Adrenal gland (tissue), 19 donors: ENCODE measurements at regions of chr20 and their contacts with region 1.

Region 1: DNA sequence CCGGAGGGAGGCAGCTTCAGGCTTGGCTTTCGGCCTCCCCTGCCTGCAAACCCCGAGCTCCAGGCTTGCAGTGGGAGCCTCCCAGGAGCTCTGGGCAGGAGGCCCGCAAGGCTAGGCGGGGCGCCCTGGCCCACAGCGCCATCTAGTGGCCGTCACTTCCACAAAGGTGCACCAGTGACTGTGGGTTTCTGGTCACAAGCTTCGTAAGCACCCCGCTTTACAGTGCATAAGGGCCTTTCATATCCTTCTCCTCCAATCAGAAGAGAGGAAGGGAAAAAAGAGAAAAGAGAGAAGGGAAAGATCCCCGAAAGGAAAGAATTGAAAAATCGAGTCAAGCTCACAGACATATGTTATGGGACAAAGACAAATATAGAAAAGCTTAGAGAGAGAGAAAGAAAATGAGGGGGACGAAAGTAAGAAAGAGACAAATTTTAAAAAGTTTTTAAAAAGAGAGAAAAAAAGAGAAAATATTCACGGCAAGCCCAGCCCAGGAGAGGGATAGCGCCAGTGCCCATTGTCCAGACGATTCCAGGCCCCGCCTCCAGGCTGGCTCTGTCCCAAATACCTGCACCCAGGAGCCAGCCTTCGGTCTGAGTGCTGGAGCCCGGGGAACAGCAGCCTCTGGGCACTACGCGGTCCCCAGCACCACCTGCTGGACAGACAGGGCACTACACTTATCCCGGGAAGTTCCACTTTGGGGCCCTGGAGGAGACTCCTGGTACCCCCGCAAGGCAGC is 207.1 kb downstream of the PREX1 start:
- DNase-seq: peak; percentile 77 to 94 (median 87)
- H3K4me3 ChIP-seq: peak overlapping the region in 2 of 4 donors; percentile 4 to 45
- H3K27ac ChIP-seq: no peak overlapping the region
- H3K4me1 ChIP-seq: peaks cover 3 to 23% of the 10 kb centered on the region in 2 donors
- H3K27me3 ChIP-seq: no peaks in the 10 kb centered on the region
- CTCF ChIP-seq: peak; percentile 73 to 97 (median 81)
- POLR2A ChIP-seq: no peak

Region 2: DNA sequence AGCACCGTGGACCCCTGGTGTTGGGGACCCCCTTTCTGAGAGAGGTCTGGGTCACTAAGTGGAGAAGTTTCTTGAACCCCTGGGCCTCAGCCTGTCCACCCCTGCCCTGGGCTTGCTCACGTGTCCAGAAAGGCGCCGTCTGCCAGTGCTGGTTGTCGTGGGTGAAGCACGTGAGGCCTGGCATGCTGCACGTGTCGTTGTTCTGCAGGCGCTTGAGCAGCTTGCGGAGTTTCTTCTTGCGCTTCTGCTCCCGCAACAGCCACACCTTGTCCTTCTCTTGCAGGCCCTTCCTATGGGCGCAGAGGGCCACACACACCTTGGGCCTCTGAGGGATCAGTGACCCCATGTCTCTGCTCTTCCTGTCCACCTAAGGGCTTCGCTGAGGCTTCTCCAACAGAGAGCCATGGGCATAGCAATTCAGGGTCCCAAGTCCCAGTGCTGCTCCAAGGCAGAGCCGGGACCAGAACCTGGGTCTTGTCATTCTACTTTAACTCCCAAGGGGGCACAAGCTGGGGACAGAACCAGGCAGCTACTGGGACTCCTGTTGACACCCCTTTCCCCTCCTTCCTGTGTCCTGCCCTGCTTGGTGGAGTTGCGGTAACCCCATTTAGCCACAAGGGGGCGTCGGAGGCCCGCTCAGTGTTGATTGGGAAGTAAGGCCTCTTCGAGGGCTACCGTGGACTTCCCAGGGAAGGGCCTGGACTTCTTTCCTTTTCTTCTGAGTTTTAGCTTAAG is 957.2 kb before region 1 on chr20:
- intact Hi-C with region 1: loop called in 1 of 2 experiments (anchors 5 kb)
- DNase-seq: peak; percentile 70 to 92 (median 78)
- H3K4me3 ChIP-seq: no peak overlapping the region
- H3K27ac ChIP-seq: no peak overlapping the region
- H3K4me1 ChIP-seq: peaks cover 6 to 16% of the 10 kb centered on the region in 2 donors
- H3K27me3 ChIP-seq: no peaks in the 10 kb centered on the region
- CTCF ChIP-seq: peak; percentile 78 to 98 (median 92)
- POLR2A ChIP-seq: no peak

Region 3: GRCh38 chr20:47677635-47678453 is 942.8 kb before region 1 on chr20:
- intact Hi-C with region 1: loop called in 1 of 2 experiments (anchors 2 kb)
- DNase-seq: peak in 5 of 7 donors; percentile 40 to 68 (median 49)
- H3K4me3 ChIP-seq: no peak overlapping the region
- H3K27ac ChIP-seq: no peak overlapping the region
- H3K4me1 ChIP-seq: no peaks in the 10 kb centered on the region
- H3K27me3 ChIP-seq: no peaks in the 10 kb centered on the region
- CTCF ChIP-seq: peak; percentile 55 to 77 (median 68)
- POLR2A ChIP-seq: no peak

Region 4: DNA sequence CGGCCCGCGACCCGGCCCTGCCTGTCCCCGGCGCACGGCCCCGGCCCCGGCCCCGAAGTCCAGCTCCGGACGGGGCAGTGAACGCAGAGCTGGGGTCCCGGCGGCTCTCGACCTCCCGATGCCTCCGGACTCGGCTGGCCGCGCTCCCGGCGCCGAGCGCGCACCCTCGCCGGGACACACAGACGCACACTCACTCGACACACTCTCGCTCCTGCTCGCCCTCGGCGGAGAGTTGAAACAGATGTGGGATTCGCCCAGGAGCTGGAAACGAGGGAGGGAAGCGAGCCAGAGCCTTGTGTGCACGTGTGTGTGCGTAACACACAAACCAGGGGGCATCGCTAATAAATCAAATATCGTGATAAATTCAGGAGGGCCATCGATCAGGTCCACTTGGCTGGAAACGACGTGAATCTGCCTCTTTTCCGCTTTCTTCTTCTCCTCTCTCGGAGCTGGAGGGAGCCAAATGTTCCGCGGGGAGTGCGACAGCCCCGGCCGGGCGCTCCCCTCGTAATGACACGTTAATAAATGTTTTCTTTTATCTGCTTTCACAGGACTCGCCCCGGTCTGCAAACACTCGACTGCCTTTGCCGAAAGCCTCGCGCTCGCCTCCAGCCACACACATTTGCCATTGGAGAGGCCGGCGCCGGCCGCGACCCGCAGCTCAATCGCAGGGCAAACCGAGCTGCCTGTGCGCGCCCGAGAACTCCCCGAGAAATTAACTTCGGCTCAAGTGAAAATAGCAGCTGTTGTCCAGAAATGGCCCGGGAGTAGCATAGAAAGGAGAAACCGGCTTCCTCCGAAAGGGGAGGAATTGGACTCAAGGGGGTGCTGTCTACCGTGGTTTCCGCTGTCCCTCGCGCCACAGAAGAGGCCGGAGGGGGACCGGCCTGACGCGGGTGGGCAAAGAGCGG is 834.6 kb before region 1 on chr20:
- intact Hi-C with region 1: loop called in 1 of 2 experiments (anchors 2 kb)
- DNase-seq: peak; percentile 61 to 85 (median 71)
- H3K4me3 ChIP-seq: peak overlapping the region in 2 of 4 donors; percentile 1 to 50
- H3K27ac ChIP-seq: peak overlapping the region in 4 of 5 donors; percentile 12 to 87 (median 50)
- H3K4me1 ChIP-seq: peaks cover 7 to 24% of the 10 kb centered on the region in 2 donors
- H3K27me3 ChIP-seq: no peaks in the 10 kb centered on the region
- CTCF ChIP-seq: peak; percentile 47 to 79 (median 62)
- POLR2A ChIP-seq: peak in 1 of 2 donors; percentile 20

Region 5: GRCh38 chr20:48319960-48320584 is 300.6 kb before region 1 on chr20:
- intact Hi-C with region 1: loop called in 1 of 2 experiments (anchors 10 kb)
- DNase-seq: no peak
- H3K4me3 ChIP-seq: no peak overlapping the region
- H3K27ac ChIP-seq: no peak overlapping the region
- H3K4me1 ChIP-seq: no peaks in the 10 kb centered on the region
- H3K27me3 ChIP-seq: no peaks in the 10 kb centered on the region
- CTCF ChIP-seq: no peak
- POLR2A ChIP-seq: no peak

Region 6: DNA sequence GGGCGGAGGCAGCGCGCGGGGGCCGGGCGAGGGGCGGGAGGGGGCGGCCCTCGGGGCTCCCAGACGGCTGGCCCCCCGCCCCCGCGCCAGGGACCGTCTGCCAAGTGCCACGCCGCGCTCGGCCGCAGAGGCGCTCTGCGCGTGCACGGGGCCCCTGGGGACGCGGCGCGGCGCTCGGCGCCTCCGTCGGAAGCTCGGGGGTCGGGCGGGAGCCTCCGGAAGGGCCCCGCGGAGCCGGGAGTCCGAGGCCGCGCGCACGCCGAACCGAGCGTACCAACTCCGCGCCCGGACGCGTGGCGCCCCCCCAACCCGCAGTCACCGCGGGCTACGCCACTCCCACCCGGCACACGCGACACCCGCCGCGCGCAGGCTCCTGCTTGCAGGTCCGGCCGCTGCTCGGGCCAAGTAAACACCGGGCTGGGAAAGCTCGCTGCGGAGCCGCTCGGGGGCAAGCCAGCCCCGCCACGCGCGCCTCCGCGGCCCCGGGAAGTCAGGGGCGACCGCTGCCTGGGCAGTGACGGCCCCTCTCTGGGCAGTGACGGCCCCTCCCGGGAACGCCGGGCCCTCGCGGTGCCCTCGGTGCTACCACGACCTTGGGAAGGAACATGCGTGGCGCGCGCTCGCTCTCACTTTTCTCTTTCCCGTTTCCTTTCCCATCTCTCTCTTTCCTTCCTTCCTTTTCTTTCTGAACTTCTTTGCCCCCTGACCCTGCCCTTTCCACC is 207.5 kb after region 1 on chr20:
- intact Hi-C with region 1: no loop called
- DNase-seq: peak; percentile 78 to 86 (median 82)
- H3K4me3 ChIP-seq: peak overlapping the region in 2 of 4 donors; percentile 20 to 73
- H3K27ac ChIP-seq: peak overlapping the region in 3 of 5 donors; percentile 72 to 89 (median 80)
- H3K4me1 ChIP-seq: peaks cover 23 to 57% of the 10 kb centered on the region in 2 donors
- H3K27me3 ChIP-seq: no peaks in the 10 kb centered on the region
- CTCF ChIP-seq: peak in 3 of 6 experiments; percentile 39 to 56 (median 48)
- POLR2A ChIP-seq: peak in 1 of 2 donors; percentile 65